H1 (cell line): ENCODE measurements at regions of chr10 and their contacts with region 1.

Region 1: GRCh38 chr10:97518301-97519043 is 19.7 kb downstream of the UBTD1 start:
- DNase-seq: peak in 1 of 2 experiments; percentile 51
- H3K4me3 ChIP-seq: no peak overlapping the region
- H3K27ac ChIP-seq: no peak overlapping the region
- H3K4me1 ChIP-seq: peaks cover 11 to 23% (median 19%) of the 10 kb centered on the region in 4 experiments
- H3K27me3 ChIP-seq: no peaks in the 10 kb centered on the region
- CTCF ChIP-seq: no peak
- EP300 ChIP-seq: no peak
- POLR2A ChIP-seq: no peak
- RAD21 ChIP-seq: no peak

Region 2: GRCh38 chr10:97508342-97508741 is 10.1 kb before region 1 on chr10:
- CTCF ChIA-PET with region 1: interaction called, 13 read pairs
- POLR2A ChIA-PET with region 1: interaction called, 6 read pairs
- DNase-seq: no peak
- H3K4me3 ChIP-seq: no peak overlapping the region
- H3K27ac ChIP-seq: no peak overlapping the region
- H3K4me1 ChIP-seq: peaks cover 0 to 8% (median 3%) of the 10 kb centered on the region in 4 experiments; a peak in 5 of 7 replicates
- H3K27me3 ChIP-seq: no peaks in the 10 kb centered on the region; a peak in 1 of 7 replicates
- CTCF ChIP-seq: no peak
- EP300 ChIP-seq: no peak
- POLR2A ChIP-seq: no peak
- RAD21 ChIP-seq: no peak

Region 3: GRCh38 chr10:97534746-97535367 is 16.4 kb after region 1 on chr10:
- CTCF ChIA-PET with region 1: interaction called, 283 read pairs
- POLR2A ChIA-PET with region 1: interaction called, 12 read pairs
- DNase-seq: peak in 1 of 2 experiments; percentile 79
- H3K4me3 ChIP-seq: no peak overlapping the region
- H3K27ac ChIP-seq: no peak overlapping the region
- H3K4me1 ChIP-seq: peaks cover 0 to 15% (median 8%) of the 10 kb centered on the region in 4 experiments; a peak in 6 of 7 replicates
- H3K27me3 ChIP-seq: no peaks in the 10 kb centered on the region
- CTCF ChIP-seq: peak; percentile 78 to 85 (median 84)
- EP300 ChIP-seq: no peak
- POLR2A ChIP-seq: no peak
- RAD21 ChIP-seq: peak; percentile 67 to 76

Region 4: GRCh38 chr10:97543025-97543575 is 24.6 kb after region 1 on chr10:
- CTCF ChIA-PET with region 1: interaction called, 283 read pairs
- POLR2A ChIA-PET with region 1: interaction called, 4 read pairs
- DNase-seq: no peak
- H3K4me3 ChIP-seq: no peak overlapping the region
- H3K27ac ChIP-seq: no peak overlapping the region
- H3K4me1 ChIP-seq: peaks cover 0 to 21% (median 8%) of the 10 kb centered on the region in 4 experiments; a peak in 6 of 7 replicates
- H3K27me3 ChIP-seq: no peaks in the 10 kb centered on the region
- CTCF ChIP-seq: no peak
- EP300 ChIP-seq: no peak
- POLR2A ChIP-seq: no peak
- RAD21 ChIP-seq: no peak

Region 5: GRCh38 chr10:97553575-97554031 is 35.1 kb after region 1 on chr10:
- CTCF ChIA-PET with region 1: interaction called, 20 read pairs
- POLR2A ChIA-PET with region 1: interaction called, 3 read pairs
- DNase-seq: peak in 1 of 2 experiments; percentile 81
- H3K4me3 ChIP-seq: peak overlapping the region in 3 of 4 experiments; percentile 30 to 32 (median 31); a peak in 6 of 8 replicates
- H3K27ac ChIP-seq: no peak overlapping the region; the same call in 1 of the 2 replicates
- H3K4me1 ChIP-seq: peaks cover 15 to 29% (median 22%) of the 10 kb centered on the region in 4 experiments
- H3K27me3 ChIP-seq: no peaks in the 10 kb centered on the region
- CTCF ChIP-seq: peak; percentile 89 to 95 (median 95)
- EP300 ChIP-seq: no peak
- POLR2A ChIP-seq: no peak
- RAD21 ChIP-seq: peak; percentile 84 to 88